Dendritic cell treated with granulocyte-macrophage colony-stimulating factor and Interleukin-4, amounts not matched to agents 40 ng/mL and 50 ng/mL, for 4 days (primary cell): ENCODE measurements at regions of chr6 and their contacts with region 1.

Region 1: GRCh38 chr6:35139908-35140655 is 1.1 kb downstream of the TCP11 start:
- H3K4me3 Mint-ChIP-seq: peak overlapping the region; percentile 56
- H3K27ac Mint-ChIP-seq: peak overlapping the region; percentile 75
- H3K4me1 Mint-ChIP-seq: peaks cover 38% of the 10 kb centered on the region
- H3K27me3 Mint-ChIP-seq: peaks cover 12% of the 10 kb centered on the region

Region 2: GRCh38 chr6:35202066-35202546 is 62.0 kb after region 1 on chr6:
- intact Hi-C with region 1: loop called (anchors 10 kb)
- H3K4me3 Mint-ChIP-seq: no peak overlapping the region
- H3K27ac Mint-ChIP-seq: no peak overlapping the region
- H3K4me1 Mint-ChIP-seq: no peaks in the 10 kb centered on the region
- H3K27me3 Mint-ChIP-seq: peaks cover 38% of the 10 kb centered on the region

Region 3: GRCh38 chr6:35948725-35949124 is 808.6 kb after region 1 on chr6:
- intact Hi-C with region 1: no loop called
- H3K4me3 Mint-ChIP-seq: no peak overlapping the region
- H3K27ac Mint-ChIP-seq: no peak overlapping the region
- H3K4me1 Mint-ChIP-seq: peaks cover 13% of the 10 kb centered on the region
- H3K27me3 Mint-ChIP-seq: no peaks in the 10 kb centered on the region